ENCODE measurements at regions of chr11 and their contacts with region 1.

Region 1: DNA sequence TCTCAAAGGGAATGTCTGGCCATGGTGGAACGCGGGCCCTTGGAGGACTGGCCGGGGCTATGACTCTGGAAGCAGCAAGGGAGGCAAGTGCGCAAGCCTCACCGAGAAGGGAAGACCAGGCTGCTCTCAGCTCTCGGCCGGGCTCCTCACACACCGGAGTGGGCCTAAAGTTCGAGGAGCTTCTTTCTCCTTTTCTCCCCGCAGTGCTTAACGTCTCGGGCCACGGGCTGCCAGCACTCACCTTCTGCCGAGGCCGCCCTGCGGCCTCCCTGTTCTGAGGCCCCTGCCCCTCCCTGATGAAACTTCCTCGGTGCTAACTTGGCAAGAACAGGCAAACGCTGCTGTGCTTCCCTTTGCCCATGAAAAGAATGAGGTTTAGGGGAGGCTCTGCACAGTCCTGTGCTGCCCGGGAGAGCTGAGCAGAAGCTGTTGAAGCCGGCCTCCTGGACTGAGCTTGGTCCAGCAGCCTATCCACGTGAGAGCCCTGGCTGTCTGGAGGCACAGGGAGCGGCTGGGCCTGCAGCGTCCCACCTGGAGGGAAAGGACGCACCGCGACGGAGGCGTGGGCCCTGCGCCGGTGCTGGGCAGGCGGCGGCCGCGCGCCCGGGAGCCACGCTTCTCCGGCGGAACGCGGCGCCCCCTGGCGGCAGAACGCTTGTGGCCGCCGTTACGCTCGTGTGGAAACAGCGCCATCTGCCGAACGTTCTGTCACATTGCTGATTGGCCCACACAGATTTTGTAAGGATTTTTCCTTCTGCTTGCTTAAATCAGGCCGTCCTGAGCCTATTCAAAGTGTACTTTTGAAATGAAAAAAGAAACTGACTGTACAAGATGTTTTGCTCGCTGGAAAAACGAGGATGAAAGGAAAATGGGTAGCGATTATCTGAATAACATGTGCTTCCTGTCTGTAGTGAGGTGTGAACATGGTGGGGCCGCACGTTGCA is 65.0 kb upstream of the TMEM45B start:
- DNase-seq: peak; percentile 45 to 96 (median 73)

Region 2: GRCh38 chr11:128884703-128885338 is 865.8 kb before region 1 on chr11:
- intact Hi-C with region 1: loop called (anchors 10 kb)
- DNase-seq: peak in 7 of 10 donors; percentile 51 to 93 (median 62)

Region 3: DNA sequence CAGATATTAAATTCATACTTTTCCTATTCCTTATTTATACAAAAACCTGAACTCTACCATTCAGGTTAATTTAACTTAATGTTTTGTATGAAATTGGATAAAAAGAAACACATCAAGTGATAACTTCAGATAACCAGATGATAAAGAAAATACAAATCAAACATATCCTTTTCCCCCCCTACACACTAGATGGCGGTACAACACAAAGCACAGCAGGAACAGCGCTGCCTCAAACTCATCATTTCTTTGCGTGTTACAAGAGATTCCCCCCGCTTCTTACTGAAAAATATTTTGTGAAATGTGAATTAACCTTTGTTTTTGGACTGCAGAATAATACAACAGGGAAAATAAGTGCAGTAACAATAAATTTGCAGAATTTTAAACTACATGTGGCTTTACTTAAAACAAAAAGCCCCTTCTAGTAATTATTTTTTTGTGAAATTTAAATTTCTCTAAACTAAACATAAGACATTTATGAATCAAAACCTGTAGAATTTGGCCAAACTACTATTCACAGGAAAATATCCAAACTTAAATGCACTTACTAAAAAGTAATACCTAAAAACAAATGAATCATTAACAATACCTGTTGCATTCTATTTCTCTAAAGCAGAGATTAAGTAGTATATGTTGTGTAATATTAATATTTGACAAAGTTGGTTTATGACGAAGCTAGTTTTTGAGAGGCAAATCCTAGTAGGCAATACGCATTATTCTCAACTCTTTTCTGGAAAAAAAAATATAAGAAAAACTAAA is 632.8 kb before region 1 on chr11:
- intact Hi-C with region 1: loop called (anchors 2 kb)
- DNase-seq: peak in 4 of 10 donors; percentile 26 to 86 (median 42)

Region 4: DNA sequence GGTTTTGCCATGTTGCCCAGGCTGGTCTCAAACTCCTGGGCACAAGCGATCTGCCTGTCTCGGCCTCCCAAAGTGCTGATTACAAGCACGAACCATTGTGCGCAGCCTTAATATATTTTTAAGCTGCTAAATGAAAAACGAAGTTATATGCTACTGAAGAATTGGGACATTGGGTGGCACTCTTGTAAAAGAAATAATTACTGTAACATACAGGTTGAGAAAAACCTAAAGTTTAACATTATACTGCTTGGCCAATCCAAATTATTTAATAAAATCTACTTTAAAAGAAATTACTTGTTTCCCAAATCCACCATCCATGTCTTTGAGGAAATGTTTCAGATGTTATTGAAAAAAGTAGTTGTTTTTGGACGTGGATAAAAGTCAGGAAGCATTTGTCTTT is 520.6 kb before region 1 on chr11:
- intact Hi-C with region 1: loop called (anchors 10 kb)
- DNase-seq: no peak

Region 5: DNA sequence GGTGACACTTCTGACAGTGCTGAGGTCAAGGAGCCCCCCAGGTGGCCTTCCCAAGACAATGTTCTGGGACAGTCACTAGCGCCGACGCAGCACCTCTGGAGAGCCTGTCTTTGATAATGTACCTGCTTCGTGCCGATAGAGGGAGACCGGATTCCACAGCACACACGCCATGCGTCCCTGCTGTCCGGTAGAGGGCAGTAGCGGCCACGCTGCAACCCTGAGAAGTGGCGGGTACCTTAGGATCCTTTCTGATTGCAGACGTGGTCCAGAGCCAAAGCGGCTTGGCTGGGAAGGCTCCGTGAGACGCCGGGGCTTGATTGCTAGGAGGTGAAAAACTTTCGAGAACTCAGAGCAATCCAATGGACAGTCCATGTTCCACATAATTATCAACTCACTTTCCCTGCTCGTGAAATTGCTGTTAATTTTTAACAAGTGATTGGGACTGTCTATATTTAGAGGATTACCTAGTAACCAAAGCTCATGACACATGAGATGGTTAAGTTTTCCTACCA is 386.4 kb before region 1 on chr11:
- intact Hi-C with region 1: loop called (anchors 1 kb)
- DNase-seq: peak; percentile 52 to 96 (median 72)

Region 6: DNA sequence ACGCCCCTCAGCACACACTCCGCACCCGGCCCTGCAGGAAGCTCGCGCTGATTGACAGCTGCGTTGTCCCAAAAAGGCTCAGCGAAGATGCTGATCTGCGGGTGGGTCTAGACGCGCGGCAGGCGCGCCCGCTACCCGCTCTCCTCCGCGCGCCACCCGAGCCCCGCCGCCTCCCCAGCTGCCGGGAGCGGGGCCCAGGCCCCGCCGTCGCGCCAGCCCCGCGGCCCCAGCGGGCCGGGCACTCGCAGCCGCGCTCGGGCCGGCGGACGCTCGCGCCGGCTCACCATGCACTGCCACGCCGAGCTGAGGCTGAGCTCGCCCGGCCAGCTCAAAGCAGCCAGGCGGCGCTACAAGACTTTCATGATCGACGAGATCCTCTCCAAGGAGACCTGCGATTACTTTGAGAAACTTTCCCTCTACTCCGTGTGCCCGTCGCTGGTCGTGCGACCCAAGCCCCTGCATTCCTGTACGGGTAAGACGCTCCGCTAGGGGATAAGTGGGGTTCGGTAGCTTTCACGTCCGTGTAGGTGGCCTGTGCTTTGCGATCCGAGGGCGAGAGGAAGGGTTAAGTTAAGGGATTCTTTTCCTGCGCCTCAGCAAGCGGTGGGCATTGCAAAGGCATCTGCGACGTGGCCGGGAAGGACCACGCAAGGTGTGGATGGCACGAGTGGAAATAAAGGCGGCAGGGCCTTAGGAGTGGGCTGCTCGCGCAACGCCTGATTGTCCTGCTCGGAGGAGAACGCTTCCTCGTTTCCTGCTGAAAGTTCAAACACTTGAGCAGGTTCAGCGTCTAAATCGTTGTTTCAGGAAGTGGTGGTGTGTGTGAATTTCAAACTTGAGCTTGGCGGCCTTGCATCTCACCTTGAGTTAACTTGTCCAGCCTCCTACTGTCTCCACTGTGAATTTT is 374.6 kb before region 1 on chr11 and contains the start of gene BARX2:
- intact Hi-C with region 1: loop called (anchors 2 kb)
- DNase-seq: peak in 8 of 10 donors; percentile 27 to 90 (median 52)

Region 7: GRCh38 chr11:129803533-129803932 is 52.9 kb after region 1 on chr11:
- intact Hi-C with region 1: no loop called
- DNase-seq: no peak

Measured in posterior cingulate gyrus (tissue), 11 donors.